Naive thymus-derived CD4-positive, alpha-beta T cell (primary cell): ENCODE measurements at regions of chr4 and their contacts with region 1.

Region 1: GRCh38 chr4:22463179-22463578 is 52.7 kb downstream of the ADGRA3 start:
- DNase-seq: no peak
- ATAC-seq: no peak
- H3K4me3 ChIP-seq: no peak overlapping the region
- H3K4me3 Mint-ChIP-seq: no peak overlapping the region
- H3K27ac ChIP-seq: no peak overlapping the region
- H3K27ac Mint-ChIP-seq: peak overlapping the region in 1 of 9 donors; percentile 6
- H3K4me1 ChIP-seq: no peaks in the 10 kb centered on the region
- H3K4me1 Mint-ChIP-seq: peaks cover 0 to 12% (median 6%) of the 10 kb centered on the region in 7 donors
- H3K27me3 ChIP-seq: no peaks in the 10 kb centered on the region
- H3K27me3 Mint-ChIP-seq: no peaks in the 10 kb centered on the region

Region 2: GRCh38 chr4:22410645-22411247 is 52.4 kb before region 1 on chr4:
- CTCF ChIA-PET with region 1: no interaction called
- POLR2A ChIA-PET with region 1: no interaction called
- intact Hi-C with region 1: loop called (anchors 1 to 10 kb)
- DNase-seq: peak in 5 of 9 donors; percentile 8 to 39 (median 18)
- ATAC-seq: no peak
- H3K4me3 ChIP-seq: no peak overlapping the region
- H3K4me3 Mint-ChIP-seq: no peak overlapping the region
- H3K27ac ChIP-seq: no peak overlapping the region
- H3K27ac Mint-ChIP-seq: no peak overlapping the region
- H3K4me1 ChIP-seq: no peaks in the 10 kb centered on the region
- H3K4me1 Mint-ChIP-seq: no peaks in the 10 kb centered on the region
- H3K27me3 ChIP-seq: no peaks in the 10 kb centered on the region
- H3K27me3 Mint-ChIP-seq: no peaks in the 10 kb centered on the region

Region 3: GRCh38 chr4:22490718-22491315 is 27.6 kb after region 1 on chr4:
- CTCF ChIA-PET with region 1: no interaction called
- POLR2A ChIA-PET with region 1: no interaction called
- intact Hi-C with region 1: no loop called
- DNase-seq: no peak
- ATAC-seq: no peak
- H3K4me3 ChIP-seq: no peak overlapping the region
- H3K4me3 Mint-ChIP-seq: no peak overlapping the region
- H3K27ac ChIP-seq: no peak overlapping the region
- H3K27ac Mint-ChIP-seq: no peak overlapping the region
- H3K4me1 ChIP-seq: no peaks in the 10 kb centered on the region
- H3K4me1 Mint-ChIP-seq: peaks cover 0 to 14% (median 2%) of the 10 kb centered on the region in 7 donors
- H3K27me3 ChIP-seq: no peaks in the 10 kb centered on the region
- H3K27me3 Mint-ChIP-seq: no peaks in the 10 kb centered on the region